HCT116 (cell line): ENCODE measurements at regions of chr17 and their contacts with region 1.

Region 1: GRCh38 chr17:35119368-35120165 is at the start of gene RAD51D:
- DNase-seq: peak; percentile 48
- ATAC-seq: peak; percentile 87
- H3K4me3 ChIP-seq: peak within 1 kb of the TSS; percentile 70 to 72
- H3K27ac ChIP-seq: peak within 1 kb of the TSS; percentile 78
- H3K4me1 ChIP-seq: peaks cover 5 to 23% of the 10 kb centered on the region in 2 experiments; a peak in 3 of 4 replicates
- H3K27me3 ChIP-seq: no peaks in the 10 kb centered on the region
- CTCF ChIP-seq: peak; percentile 58 to 88 (median 84); a peak in 5 of 6 replicates
- POLR2A ChIP-seq: no peak
- RAD21 ChIP-seq: peak; percentile 82
- total RNA-seq, gene RAD51D: 12.9 TPM

Region 2: GRCh38 chr17:34420254-34420766 is 699.3 kb before region 1 on chr17:
- CTCF ChIA-PET with region 1: interaction called, 6 read pairs
- POLR2A ChIA-PET with region 1: no interaction called
- RAD21 ChIA-PET with region 1: no interaction called
- intact Hi-C with region 1: loop called (anchors 2 kb)
- DNase-seq: peak; percentile 40
- ATAC-seq: peak; percentile 84
- H3K4me3 ChIP-seq: no peak overlapping the region
- H3K27ac ChIP-seq: no peak overlapping the region
- H3K4me1 ChIP-seq: no peaks in the 10 kb centered on the region
- H3K27me3 ChIP-seq: peaks cover 42% of the 10 kb centered on the region
- CTCF ChIP-seq: peak; percentile 55 to 94 (median 84); a peak in 5 of 6 replicates
- POLR2A ChIP-seq: no peak
- RAD21 ChIP-seq: peak; percentile 80

Region 3: GRCh38 chr17:34542700-34543336 is 576.7 kb before region 1 on chr17:
- CTCF ChIA-PET with region 1: interaction called, 4 read pairs
- POLR2A ChIA-PET with region 1: no interaction called
- RAD21 ChIA-PET with region 1: no interaction called
- intact Hi-C with region 1: loop called (anchors 2 kb)
- DNase-seq: no peak
- ATAC-seq: peak; percentile 73
- H3K4me3 ChIP-seq: no peak overlapping the region
- H3K27ac ChIP-seq: no peak overlapping the region
- H3K4me1 ChIP-seq: no peaks in the 10 kb centered on the region
- H3K27me3 ChIP-seq: peaks cover 35% of the 10 kb centered on the region
- CTCF ChIP-seq: peak; percentile 70 to 99 (median 90)
- POLR2A ChIP-seq: no peak
- RAD21 ChIP-seq: peak; percentile 74

Region 4: DNA sequence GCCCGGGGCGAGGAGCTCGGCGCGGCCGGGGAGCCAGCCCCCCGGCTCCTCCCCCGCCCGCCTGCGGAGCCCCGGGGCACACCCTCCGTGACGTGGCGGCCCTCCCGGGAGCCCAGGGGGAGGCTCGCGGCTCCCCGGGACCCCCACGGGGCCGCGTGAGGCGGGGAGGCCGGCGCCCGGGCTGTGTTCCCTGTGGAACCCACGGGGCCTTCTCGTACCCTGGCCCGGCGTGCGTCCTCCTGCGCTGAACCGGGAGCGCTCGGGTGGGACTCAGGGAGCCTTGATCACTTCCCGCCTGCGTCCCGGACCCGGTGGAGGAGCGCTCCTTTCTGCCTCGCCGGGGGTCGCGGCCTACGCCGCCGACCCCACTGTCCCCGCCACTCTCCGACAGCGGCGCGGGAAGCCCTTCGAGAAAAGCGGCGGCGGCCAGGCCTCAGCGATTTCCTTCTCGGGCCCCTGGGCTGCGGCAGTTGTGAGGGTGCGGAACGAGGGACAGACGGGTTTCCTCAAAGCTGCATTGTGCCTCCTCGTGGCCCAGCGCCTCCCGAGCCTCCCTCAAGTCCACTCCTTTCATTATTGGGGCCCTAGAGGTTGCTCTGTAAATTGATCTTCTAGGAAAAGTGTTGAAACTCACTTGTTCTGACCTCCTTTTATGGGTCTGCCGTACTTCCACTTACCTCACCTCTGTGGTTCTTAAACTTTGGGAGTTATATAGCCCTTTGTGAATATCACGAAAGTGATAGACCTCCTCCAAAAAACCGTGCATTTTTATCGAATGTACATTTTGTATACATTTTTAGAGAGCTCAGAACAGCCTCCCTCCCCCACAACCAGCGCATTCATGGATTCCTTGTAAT is 138.7 kb before region 1 on chr17:
- CTCF ChIA-PET with region 1: no interaction called
- POLR2A ChIA-PET with region 1: interaction called, 3 read pairs
- RAD21 ChIA-PET with region 1: no interaction called
- intact Hi-C with region 1: loop called (anchors 5 kb)
- DNase-seq: peak; percentile 56
- ATAC-seq: peak; percentile 88
- H3K4me3 ChIP-seq: peak overlapping the region; percentile 68 to 80
- H3K27ac ChIP-seq: peak overlapping the region; percentile 87
- H3K4me1 ChIP-seq: peaks cover 9 to 19% of the 10 kb centered on the region in 2 experiments; a peak in 3 of 4 replicates
- H3K27me3 ChIP-seq: no peaks in the 10 kb centered on the region
- CTCF ChIP-seq: peak; percentile 27 to 38 (median 35); a peak in 5 of 6 replicates
- POLR2A ChIP-seq: no peak
- RAD21 ChIP-seq: peak; percentile 40

Region 5: DNA sequence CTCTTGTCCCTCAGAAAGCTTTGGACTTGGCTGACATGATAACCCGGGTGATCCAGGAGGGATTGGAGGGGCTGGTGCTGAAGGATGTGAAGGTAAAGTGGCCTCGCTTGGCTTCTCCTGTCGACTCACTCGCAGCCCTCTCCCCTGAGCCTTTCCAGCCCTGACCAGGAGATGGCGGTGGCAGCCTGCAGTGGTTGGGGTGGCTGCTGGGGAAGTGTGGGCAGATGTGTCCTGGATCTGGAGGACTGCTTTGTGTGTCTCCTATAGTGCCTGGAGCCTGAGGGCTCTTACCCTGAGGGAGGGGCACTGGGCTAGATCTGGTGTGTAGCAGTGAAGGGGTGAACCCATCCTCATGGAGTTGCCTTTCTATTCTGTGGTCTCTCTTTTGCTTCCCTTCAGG is 121.4 kb before region 1 on chr17:
- CTCF ChIA-PET with region 1: interaction called, 12 read pairs
- POLR2A ChIA-PET with region 1: no interaction called
- RAD21 ChIA-PET with region 1: interaction called in 1 of 2 experiments, 3 read pairs
- intact Hi-C with region 1: loop called (anchors 1 kb)
- DNase-seq: peak; percentile 38
- ATAC-seq: peak; percentile 97
- H3K4me3 ChIP-seq: no peak overlapping the region
- H3K27ac ChIP-seq: no peak overlapping the region
- H3K4me1 ChIP-seq: no peaks in the 10 kb centered on the region
- H3K27me3 ChIP-seq: no peaks in the 10 kb centered on the region
- CTCF ChIP-seq: peak; percentile 84 to 93 (median 87)
- POLR2A ChIP-seq: no peak
- RAD21 ChIP-seq: peak; percentile 95

Region 6: DNA sequence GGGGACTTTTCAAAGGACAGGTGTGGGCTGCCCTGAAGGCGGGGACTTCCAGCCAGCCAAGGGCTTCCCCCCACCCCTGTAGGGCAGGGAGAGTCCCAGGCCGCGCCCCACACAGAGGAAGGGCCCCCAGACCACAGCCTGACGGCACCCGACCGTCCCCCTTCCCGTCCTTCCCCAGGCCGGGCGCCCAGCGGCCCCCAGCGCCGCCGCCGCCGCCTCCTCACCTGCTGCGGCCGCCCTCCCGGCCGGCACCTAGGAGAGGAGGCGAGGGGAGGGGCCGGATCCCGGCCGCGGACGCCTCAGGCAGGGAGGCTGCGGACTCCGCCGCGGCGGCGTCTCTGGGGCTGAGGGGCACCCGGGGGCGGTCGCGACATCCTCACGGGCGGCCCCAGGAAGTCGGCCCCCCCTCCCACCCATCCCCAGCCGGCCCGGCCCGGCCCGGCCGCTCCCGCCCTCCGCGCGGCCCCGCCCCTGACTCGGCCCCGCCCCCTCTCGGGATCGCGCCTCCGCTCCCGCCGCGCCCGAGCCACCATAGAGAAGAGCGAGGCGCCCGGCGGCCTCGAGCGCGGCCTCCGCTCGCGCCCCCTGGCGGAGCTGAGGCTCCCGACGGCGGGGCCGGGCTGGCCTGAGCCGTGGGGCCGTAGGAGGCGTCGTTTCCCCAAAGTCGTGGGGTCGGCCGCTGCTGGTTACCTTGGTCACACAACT is 30.5 kb before region 1 on chr17:
- CTCF ChIA-PET with region 1: interaction called, 13 read pairs
- POLR2A ChIA-PET with region 1: no interaction called
- RAD21 ChIA-PET with region 1: no interaction called
- intact Hi-C with region 1: no loop called
- DNase-seq: peak; percentile 57
- ATAC-seq: peak; percentile 77
- H3K4me3 ChIP-seq: peak overlapping the region; percentile 68 to 93
- H3K27ac ChIP-seq: peak overlapping the region; percentile 96
- H3K4me1 ChIP-seq: peaks cover 36 to 54% of the 10 kb centered on the region in 2 experiments
- H3K27me3 ChIP-seq: no peaks in the 10 kb centered on the region
- CTCF ChIP-seq: peak; percentile 56 to 82 (median 81)
- POLR2A ChIP-seq: no peak
- RAD21 ChIP-seq: peak; percentile 61

Region 7: GRCh38 chr17:35460354-35460851 is 340.8 kb after region 1 on chr17:
- CTCF ChIA-PET with region 1: no interaction called
- POLR2A ChIA-PET with region 1: no interaction called
- RAD21 ChIA-PET with region 1: no interaction called
- intact Hi-C with region 1: no loop called
- DNase-seq: peak; percentile 15
- ATAC-seq: peak; percentile 98
- H3K4me3 ChIP-seq: peak overlapping the region in 1 of 2 experiments; percentile 35; a peak in 2 of 4 replicates
- H3K27ac ChIP-seq: no peak overlapping the region; the same call in 1 of the 2 replicates
- H3K4me1 ChIP-seq: peaks cover 0 to 10% of the 10 kb centered on the region in 2 experiments; a peak in 2 of 4 replicates
- H3K27me3 ChIP-seq: peaks cover 26% of the 10 kb centered on the region
- CTCF ChIP-seq: no peak
- POLR2A ChIP-seq: no peak
- RAD21 ChIP-seq: no peak